Tibial artery (tissue), 4 donors: ENCODE measurements at regions of chrX and their contacts with region 1.

Region 1: GRCh38 chrX:118807151-118808017 is 16.2 kb upstream of the ZCCHC12 start:
- DNase-seq: peak in 1 of 2 donors; percentile 68
- H3K4me3 ChIP-seq: no peak overlapping the region
- H3K27ac ChIP-seq: no peak overlapping the region
- H3K4me1 ChIP-seq: peaks cover 0 to 3% (median 1%) of the 10 kb centered on the region in 4 donors
- H3K27me3 ChIP-seq: no peaks in the 10 kb centered on the region
- CTCF ChIP-seq: peak; percentile 62 to 67

Region 2: GRCh38 chrX:118603981-118604380 is 203.4 kb before region 1 on chrX:
- intact Hi-C with region 1: loop called (anchors 10 kb)
- DNase-seq: peak in 1 of 2 donors; percentile 37
- H3K4me3 ChIP-seq: no peak overlapping the region
- H3K27ac ChIP-seq: peak overlapping the region in 1 of 2 donors; percentile 52
- H3K4me1 ChIP-seq: peaks cover 0 to 20% (median 5%) of the 10 kb centered on the region in 4 donors
- H3K27me3 ChIP-seq: no peaks in the 10 kb centered on the region
- CTCF ChIP-seq: peak; percentile 54 to 66

Region 3: DNA sequence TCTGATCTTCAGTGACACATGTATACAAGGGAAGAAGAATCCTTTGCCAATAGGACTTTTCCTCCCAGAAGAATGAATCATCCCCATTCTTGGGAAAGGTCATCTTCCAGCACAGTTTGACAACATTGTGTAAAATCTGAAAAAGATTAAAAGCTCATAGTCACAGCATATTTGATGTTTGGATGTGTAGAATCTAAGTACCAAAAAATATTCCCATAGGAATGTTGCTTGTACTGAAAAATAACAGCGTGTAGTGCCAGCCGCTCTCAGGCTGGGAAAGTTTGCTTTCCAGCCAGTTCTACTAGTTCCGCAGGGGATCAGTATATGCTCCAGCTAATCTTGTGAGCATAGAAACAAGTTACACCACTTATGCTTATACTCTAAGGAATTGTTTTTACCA is 154.7 kb before region 1 on chrX:
- intact Hi-C with region 1: loop called (anchors 5 kb)
- DNase-seq: no peak
- H3K4me3 ChIP-seq: no peak overlapping the region
- H3K27ac ChIP-seq: peak overlapping the region in 1 of 2 donors; percentile 25
- H3K4me1 ChIP-seq: no peaks in the 10 kb centered on the region
- H3K27me3 ChIP-seq: no peaks in the 10 kb centered on the region
- CTCF ChIP-seq: no peak